CD4-positive, alpha-beta memory T cell (primary cell): ENCODE measurements at regions of chr17 and their contacts with region 1.

Region 1: GRCh38 chr17:31216053-31216751 is 80.8 kb downstream of the OMG start:
- DNase-seq: peak in 4 of 5 donors; percentile 21 to 33 (median 24)
- H3K4me3 ChIP-seq: no peak overlapping the region
- H3K4me3 Mint-ChIP-seq: no peak overlapping the region
- H3K27ac ChIP-seq: no peak overlapping the region
- H3K27ac Mint-ChIP-seq: no peak overlapping the region
- H3K4me1 ChIP-seq: no peaks in the 10 kb centered on the region
- H3K4me1 Mint-ChIP-seq: no peaks in the 10 kb centered on the region
- H3K27me3 ChIP-seq: no peaks in the 10 kb centered on the region
- H3K27me3 Mint-ChIP-seq: no peaks in the 10 kb centered on the region

Region 2: DNA sequence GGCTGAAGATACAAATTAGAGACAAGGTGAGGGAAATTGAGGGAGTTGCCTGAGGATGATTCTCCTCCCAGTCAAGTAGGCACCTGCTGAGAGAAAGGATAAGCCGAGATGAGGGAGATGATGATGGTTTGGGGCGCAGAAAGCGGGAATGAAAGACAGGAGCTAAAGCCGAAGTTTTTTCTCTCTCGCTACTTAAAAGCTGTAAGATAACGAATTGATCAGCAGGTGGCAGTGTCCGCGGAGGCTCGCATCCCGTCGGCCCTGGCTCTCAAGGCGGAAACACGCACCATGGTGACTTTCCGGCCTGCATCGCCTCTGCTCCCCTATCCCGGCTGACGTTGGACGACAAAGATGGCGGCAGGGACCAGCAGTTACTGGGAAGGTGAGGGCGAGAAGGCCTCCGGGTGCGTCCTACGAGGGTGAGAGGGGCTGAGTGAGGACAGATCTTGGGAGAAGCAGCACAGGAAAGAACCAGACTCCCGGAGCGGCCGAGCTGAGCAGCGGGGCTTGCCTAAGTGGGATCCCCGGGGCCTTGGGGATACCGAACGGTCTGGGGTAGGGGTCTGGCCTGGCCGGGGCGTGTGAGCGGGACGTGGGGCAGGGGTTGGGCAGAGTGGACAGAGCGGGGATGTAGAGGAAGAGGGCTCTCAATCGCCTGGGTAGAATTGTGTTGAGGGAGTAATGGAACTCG is 739.0 kb before region 1 on chr17 and contains the start of gene GOSR1:
- CTCF ChIA-PET with region 1: interaction called, 3 read pairs
- POLR2A ChIA-PET with region 1: no interaction called
- intact Hi-C with region 1: loop called (anchors 10 kb)
- DNase-seq: peak; percentile 87 to 94 (median 90)
- H3K4me3 ChIP-seq: peak within 1 kb of the TSS; percentile 77 to 94
- H3K4me3 Mint-ChIP-seq: peak within 1 kb of the TSS; percentile 92 to 99 (median 97)
- H3K27ac ChIP-seq: peak within 1 kb of the TSS; percentile 99
- H3K27ac Mint-ChIP-seq: peak within 1 kb of the TSS; percentile 94 to 100 (median 98)
- H3K4me1 ChIP-seq: peaks cover 20% of the 10 kb centered on the region
- H3K4me1 Mint-ChIP-seq: peaks cover 20 to 45% (median 37%) of the 10 kb centered on the region in 4 donors
- H3K27me3 ChIP-seq: peaks cover 4% of the 10 kb centered on the region
- H3K27me3 Mint-ChIP-seq: peaks cover 0 to 2% of the 10 kb centered on the region in 2 donors
- total RNA-seq, gene GOSR1: 59.5 to 64.5 TPM

Region 3: DNA sequence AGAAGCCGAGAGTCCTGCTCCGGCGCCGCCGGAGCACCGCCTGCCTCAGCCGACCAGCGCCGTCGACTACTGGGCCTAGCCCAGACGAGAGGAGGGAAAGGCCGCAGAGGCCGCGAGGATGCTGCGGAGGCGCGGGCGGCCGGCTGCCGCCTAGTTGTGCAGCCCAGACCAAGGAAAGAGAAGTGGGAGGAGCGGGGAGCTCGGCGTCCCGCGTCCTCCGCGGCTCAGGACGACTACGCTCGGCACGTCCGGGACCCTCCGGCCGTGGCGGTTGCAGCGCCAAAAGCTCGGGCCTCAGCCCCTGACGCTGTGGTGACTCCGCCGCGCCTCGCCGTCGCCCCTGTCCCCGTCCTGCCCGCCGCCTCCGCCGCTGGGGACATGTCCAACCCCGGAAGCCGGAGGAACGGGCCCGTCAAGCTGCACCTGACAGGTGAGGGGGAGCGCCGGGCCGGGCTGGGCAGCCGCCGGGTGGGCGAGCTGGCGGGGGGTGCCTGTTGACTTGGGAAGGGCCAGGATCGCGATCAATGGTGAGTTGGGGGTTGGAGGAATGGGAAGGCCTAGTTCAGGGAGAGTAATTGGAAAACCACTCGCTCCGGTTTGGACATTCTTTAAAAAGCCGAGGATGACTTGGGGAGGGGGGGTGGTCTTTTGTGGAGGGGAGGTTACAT is 207.7 kb before region 1 on chr17:
- CTCF ChIA-PET with region 1: interaction called, 44 read pairs
- POLR2A ChIA-PET with region 1: interaction called, 4 read pairs
- intact Hi-C with region 1: loop called (anchors 1 kb)
- DNase-seq: peak; percentile 54 to 63 (median 59)
- H3K4me3 ChIP-seq: peak overlapping the region; percentile 61 to 85
- H3K4me3 Mint-ChIP-seq: peak overlapping the region; percentile 92 to 96 (median 94)
- H3K27ac ChIP-seq: peak overlapping the region; percentile 65
- H3K27ac Mint-ChIP-seq: peak overlapping the region; percentile 88 to 97 (median 95)
- H3K4me1 ChIP-seq: peaks cover 8% of the 10 kb centered on the region
- H3K4me1 Mint-ChIP-seq: peaks cover 12 to 26% (median 18%) of the 10 kb centered on the region in 4 donors
- H3K27me3 ChIP-seq: no peaks in the 10 kb centered on the region
- H3K27me3 Mint-ChIP-seq: no peaks in the 10 kb centered on the region

Region 4: GRCh38 chr17:31015639-31016038 is 200.6 kb before region 1 on chr17:
- CTCF ChIA-PET with region 1: interaction called, 44 read pairs
- POLR2A ChIA-PET with region 1: no interaction called
- intact Hi-C with region 1: loop called (anchors 1 kb)
- DNase-seq: no peak
- H3K4me3 ChIP-seq: no peak overlapping the region
- H3K4me3 Mint-ChIP-seq: no peak overlapping the region
- H3K27ac ChIP-seq: no peak overlapping the region
- H3K27ac Mint-ChIP-seq: no peak overlapping the region
- H3K4me1 ChIP-seq: no peaks in the 10 kb centered on the region
- H3K4me1 Mint-ChIP-seq: peaks cover 0 to 1% (median 0%) of the 10 kb centered on the region in 4 donors
- H3K27me3 ChIP-seq: no peaks in the 10 kb centered on the region
- H3K27me3 Mint-ChIP-seq: no peaks in the 10 kb centered on the region

Region 5: GRCh38 chr17:31147507-31148202 is 68.5 kb before region 1 on chr17:
- CTCF ChIA-PET with region 1: no interaction called
- POLR2A ChIA-PET with region 1: no interaction called
- intact Hi-C with region 1: no loop called
- DNase-seq: no peak
- H3K4me3 ChIP-seq: no peak overlapping the region
- H3K4me3 Mint-ChIP-seq: no peak overlapping the region
- H3K27ac ChIP-seq: no peak overlapping the region
- H3K27ac Mint-ChIP-seq: no peak overlapping the region
- H3K4me1 ChIP-seq: no peaks in the 10 kb centered on the region
- H3K4me1 Mint-ChIP-seq: no peaks in the 10 kb centered on the region
- H3K27me3 ChIP-seq: no peaks in the 10 kb centered on the region
- H3K27me3 Mint-ChIP-seq: no peaks in the 10 kb centered on the region

Region 6: DNA sequence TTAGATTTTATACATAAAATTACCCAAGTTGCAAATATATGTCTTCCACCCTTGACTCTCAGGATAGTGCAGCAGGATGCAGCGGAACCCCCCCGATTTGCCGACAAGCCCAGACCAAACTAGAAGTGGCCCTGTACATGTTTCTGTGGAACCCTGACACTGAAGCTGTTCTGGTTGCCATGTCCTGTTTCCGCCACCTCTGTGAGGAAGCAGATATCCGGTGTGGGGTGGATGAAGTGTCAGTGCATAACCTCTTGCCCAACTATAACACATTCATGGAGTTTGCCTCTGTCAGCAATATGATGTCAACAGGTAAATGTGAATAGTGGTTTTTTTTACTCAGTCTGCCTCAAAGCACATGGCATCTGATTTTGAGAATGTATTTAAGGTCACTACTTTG is 10.2 kb after region 1 on chr17:
- CTCF ChIA-PET with region 1: interaction called, 19 read pairs
- POLR2A ChIA-PET with region 1: no interaction called
- intact Hi-C with region 1: no loop called
- DNase-seq: no peak
- H3K4me3 ChIP-seq: no peak overlapping the region
- H3K4me3 Mint-ChIP-seq: no peak overlapping the region
- H3K27ac ChIP-seq: no peak overlapping the region
- H3K27ac Mint-ChIP-seq: no peak overlapping the region
- H3K4me1 ChIP-seq: no peaks in the 10 kb centered on the region
- H3K4me1 Mint-ChIP-seq: peaks cover 0 to 7% (median 2%) of the 10 kb centered on the region in 4 donors
- H3K27me3 ChIP-seq: no peaks in the 10 kb centered on the region
- H3K27me3 Mint-ChIP-seq: no peaks in the 10 kb centered on the region

Region 7: GRCh38 chr17:31321481-31321880 is 105.3 kb after region 1 on chr17 and contains the start of gene EVI2A:
- CTCF ChIA-PET with region 1: interaction called, 6 read pairs
- POLR2A ChIA-PET with region 1: no interaction called
- intact Hi-C with region 1: loop called (anchors 5 kb)
- DNase-seq: peak; percentile 83 to 96 (median 88)
- H3K4me3 ChIP-seq: peak within 1 kb of the TSS; percentile 87 to 92
- H3K4me3 Mint-ChIP-seq: peak within 1 kb of the TSS; percentile 80 to 95 (median 90)
- H3K27ac ChIP-seq: peak within 1 kb of the TSS; percentile 73
- H3K27ac Mint-ChIP-seq: peak within 1 kb of the TSS; percentile 91 to 98 (median 95)
- H3K4me1 ChIP-seq: peaks cover 24% of the 10 kb centered on the region
- H3K4me1 Mint-ChIP-seq: peaks cover 19 to 45% (median 26%) of the 10 kb centered on the region in 4 donors
- H3K27me3 ChIP-seq: no peaks in the 10 kb centered on the region
- H3K27me3 Mint-ChIP-seq: no peaks in the 10 kb centered on the region
- total RNA-seq, gene EVI2A: 133 to 139 TPM

Region 8: GRCh38 chr17:31373150-31374093 is 157.2 kb after region 1 on chr17:
- CTCF ChIA-PET with region 1: interaction called, 37 read pairs
- POLR2A ChIA-PET with region 1: no interaction called
- intact Hi-C with region 1: loop called (anchors 1 kb)
- DNase-seq: peak in 4 of 5 donors; percentile 60 to 67 (median 63)
- H3K4me3 ChIP-seq: no peak overlapping the region
- H3K4me3 Mint-ChIP-seq: peak overlapping the region in 1 of 8 donors; percentile 1
- H3K27ac ChIP-seq: no peak overlapping the region
- H3K27ac Mint-ChIP-seq: peak overlapping the region in 1 of 7 donors; percentile 29
- H3K4me1 ChIP-seq: peaks cover 9% of the 10 kb centered on the region
- H3K4me1 Mint-ChIP-seq: peaks cover 11 to 27% (median 20%) of the 10 kb centered on the region in 4 donors
- H3K27me3 ChIP-seq: no peaks in the 10 kb centered on the region
- H3K27me3 Mint-ChIP-seq: no peaks in the 10 kb centered on the region